MCF 10A (cell line): ENCODE measurements at regions of chr18 and their contacts with region 1.

Region 1: GRCh38 chr18:22223254-22223960 is 54.0 kb downstream of the GATA6 start:
- DNase-seq: peak; percentile 98
- H3K4me3 Mint-ChIP-seq: no peak overlapping the region
- H3K27ac Mint-ChIP-seq: peak overlapping the region; percentile 27
- H3K4me1 Mint-ChIP-seq: peaks cover 21% of the 10 kb centered on the region
- H3K27me3 Mint-ChIP-seq: no peaks in the 10 kb centered on the region
- CTCF ChIP-seq: no peak

Region 2: GRCh38 chr18:22282311-22283112 is 59.1 kb after region 1 on chr18:
- CTCF ChIA-PET with region 1: no interaction called
- POLR2A ChIA-PET with region 1: no interaction called
- intact Hi-C with region 1: loop called (anchors 10 kb)
- DNase-seq: peak; percentile 71
- H3K4me3 Mint-ChIP-seq: no peak overlapping the region
- H3K27ac Mint-ChIP-seq: peak overlapping the region; percentile 84
- H3K4me1 Mint-ChIP-seq: peaks cover 39% of the 10 kb centered on the region
- H3K27me3 Mint-ChIP-seq: no peaks in the 10 kb centered on the region
- CTCF ChIP-seq: no peak

Region 3: DNA sequence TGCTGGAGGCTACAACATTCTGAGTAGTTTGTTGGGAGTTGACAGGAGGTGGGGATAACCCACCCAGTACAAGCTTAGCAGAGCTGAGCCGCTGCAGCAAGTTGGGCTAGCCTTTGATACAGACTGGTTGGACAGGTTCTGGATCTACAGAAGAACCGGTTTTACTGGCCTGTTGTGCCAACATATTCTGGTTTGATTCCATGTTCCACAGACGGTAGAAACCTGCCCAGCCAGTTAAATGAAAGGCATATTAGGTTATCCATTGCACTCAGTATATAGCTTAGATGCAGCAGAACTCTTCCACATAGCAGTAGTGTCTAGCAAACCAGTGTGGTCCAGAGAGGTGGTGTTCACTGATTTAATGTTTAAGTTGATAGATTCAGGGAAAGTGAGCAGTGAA is 690.5 kb after region 1 on chr18:
- CTCF ChIA-PET with region 1: no interaction called
- POLR2A ChIA-PET with region 1: no interaction called
- intact Hi-C with region 1: no loop called
- DNase-seq: no peak
- H3K4me3 Mint-ChIP-seq: no peak overlapping the region
- H3K27ac Mint-ChIP-seq: no peak overlapping the region
- H3K4me1 Mint-ChIP-seq: peaks cover 12% of the 10 kb centered on the region
- H3K27me3 Mint-ChIP-seq: no peaks in the 10 kb centered on the region
- CTCF ChIP-seq: no peak